Breast epithelium (tissue), 4 donors: ENCODE measurements at regions of chr3 and their contacts with region 1.

Region 1: DNA sequence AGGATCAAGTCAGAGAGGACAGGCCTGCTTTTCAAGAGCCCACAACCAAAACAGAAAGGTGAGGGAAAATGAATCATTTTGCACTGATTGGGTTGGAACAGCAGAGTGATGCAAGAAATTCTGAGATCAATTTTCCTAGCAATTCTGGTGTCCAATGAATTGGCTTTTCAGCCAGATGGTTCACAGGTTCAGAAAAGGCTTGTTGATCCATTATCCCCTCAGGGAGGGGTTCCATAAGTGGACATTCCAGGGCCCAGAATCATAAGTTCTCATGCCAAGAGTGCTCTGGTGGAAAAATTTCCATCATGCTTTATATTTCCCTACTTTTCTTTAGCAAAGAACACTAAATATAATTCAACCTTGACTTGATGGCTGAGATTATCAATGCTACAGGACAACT is 16.2 kb downstream of the RBP2 start:
- DNase-seq: no peak
- H3K4me3 ChIP-seq: no peak overlapping the region
- H3K27ac ChIP-seq: no peak overlapping the region
- H3K4me1 ChIP-seq: no peaks in the 10 kb centered on the region
- H3K27me3 ChIP-seq: no peaks in the 10 kb centered on the region
- CTCF ChIP-seq: no peak
- POLR2A ChIP-seq: no peak

Region 2: DNA sequence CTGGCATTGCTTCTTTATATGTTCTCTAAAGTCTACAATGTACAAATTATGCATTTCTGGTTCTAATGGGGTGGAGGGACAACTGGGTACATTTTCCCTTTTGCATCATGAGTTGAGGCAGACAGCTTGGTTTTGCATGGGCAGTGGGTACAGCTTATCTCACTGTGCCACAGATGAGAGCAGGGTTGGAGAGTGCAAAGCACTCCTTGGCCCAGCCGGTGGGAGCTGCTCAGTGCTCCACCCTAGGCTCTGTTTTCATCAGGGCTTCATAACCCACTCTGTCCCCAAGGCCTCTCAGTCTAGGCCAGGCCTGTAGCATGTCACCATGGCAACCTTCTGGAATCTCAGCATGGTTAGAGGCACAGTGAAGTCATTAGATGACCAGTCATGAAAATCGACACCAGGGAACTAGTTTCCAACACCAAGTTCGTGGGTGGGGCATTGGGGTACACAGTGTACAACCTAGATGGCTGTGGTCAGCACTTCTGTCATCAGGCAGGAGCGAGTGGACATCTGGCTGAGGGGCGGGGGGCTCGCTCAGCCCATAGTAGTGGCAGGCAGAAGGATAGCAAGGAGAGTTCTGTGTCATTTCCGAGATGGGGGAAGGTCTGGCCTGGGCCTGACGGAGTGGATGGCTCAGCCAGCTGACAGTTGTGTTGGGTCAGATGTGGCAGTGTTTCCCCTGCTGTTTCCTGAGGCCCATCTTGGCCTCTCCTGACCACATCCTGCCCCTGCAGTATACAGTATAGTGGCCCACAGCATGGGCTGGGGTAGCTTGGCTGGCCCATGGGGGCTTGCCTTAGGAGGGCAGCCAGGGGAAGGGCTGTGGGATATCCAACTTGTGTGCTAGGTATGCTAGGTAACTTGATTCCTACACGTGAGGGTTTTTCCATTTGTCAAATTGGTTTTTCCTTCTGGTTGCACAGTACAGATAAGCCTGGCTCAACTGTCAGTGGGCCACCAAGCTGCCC is 339.7 kb before region 1 on chr3:
- intact Hi-C with region 1: no loop called
- DNase-seq: no peak
- H3K4me3 ChIP-seq: no peak overlapping the region
- H3K27ac ChIP-seq: no peak overlapping the region
- H3K4me1 ChIP-seq: no peaks in the 10 kb centered on the region
- H3K27me3 ChIP-seq: no peaks in the 10 kb centered on the region
- CTCF ChIP-seq: no peak
- POLR2A ChIP-seq: no peak

Region 3: DNA sequence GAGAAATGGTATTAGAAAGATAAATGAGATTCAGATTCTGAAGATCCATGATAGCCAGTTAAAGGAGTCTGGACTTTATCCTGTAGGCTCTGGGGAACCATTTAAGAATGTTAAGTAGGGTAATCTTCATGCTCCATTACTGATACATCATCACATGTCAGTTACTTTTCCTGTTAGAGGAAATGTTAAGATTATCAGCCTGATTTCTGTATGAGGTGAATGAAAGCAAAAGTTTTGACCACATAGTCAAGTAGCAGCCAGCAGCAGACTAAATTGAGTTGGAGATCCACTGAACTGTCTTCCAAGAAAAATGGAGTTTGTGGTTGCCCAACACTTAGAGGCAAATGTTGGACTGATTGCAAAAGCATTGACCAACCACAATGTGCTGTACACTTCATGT is 66.0 kb before region 1 on chr3:
- intact Hi-C with region 1: no loop called
- DNase-seq: no peak
- H3K4me3 ChIP-seq: no peak overlapping the region
- H3K27ac ChIP-seq: no peak overlapping the region
- H3K4me1 ChIP-seq: no peaks in the 10 kb centered on the region
- H3K27me3 ChIP-seq: no peaks in the 10 kb centered on the region
- CTCF ChIP-seq: no peak
- POLR2A ChIP-seq: no peak

Region 4: DNA sequence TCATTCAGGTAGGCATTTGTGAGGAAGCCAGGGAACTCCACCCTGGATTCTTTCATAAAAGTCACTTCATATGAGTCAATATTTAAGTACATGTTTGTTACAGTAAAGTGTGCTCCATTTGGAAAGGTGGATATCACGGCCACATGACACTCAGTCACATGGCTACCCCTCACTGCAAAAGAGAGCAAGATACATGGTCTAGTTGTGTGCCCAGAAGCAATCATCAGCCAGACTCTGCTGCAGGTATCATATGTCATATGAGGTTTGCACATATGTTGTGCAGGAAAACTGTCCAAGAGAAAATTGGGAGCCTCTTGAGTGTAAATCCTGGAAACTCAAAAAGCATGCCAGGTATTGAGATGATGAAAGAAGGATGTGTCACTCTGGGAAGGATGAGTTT is 272.7 kb after region 1 on chr3:
- intact Hi-C with region 1: no loop called
- DNase-seq: no peak
- H3K4me3 ChIP-seq: no peak overlapping the region
- H3K27ac ChIP-seq: no peak overlapping the region
- H3K4me1 ChIP-seq: no peaks in the 10 kb centered on the region
- H3K27me3 ChIP-seq: no peaks in the 10 kb centered on the region
- CTCF ChIP-seq: no peak
- POLR2A ChIP-seq: no peak

Region 5: DNA sequence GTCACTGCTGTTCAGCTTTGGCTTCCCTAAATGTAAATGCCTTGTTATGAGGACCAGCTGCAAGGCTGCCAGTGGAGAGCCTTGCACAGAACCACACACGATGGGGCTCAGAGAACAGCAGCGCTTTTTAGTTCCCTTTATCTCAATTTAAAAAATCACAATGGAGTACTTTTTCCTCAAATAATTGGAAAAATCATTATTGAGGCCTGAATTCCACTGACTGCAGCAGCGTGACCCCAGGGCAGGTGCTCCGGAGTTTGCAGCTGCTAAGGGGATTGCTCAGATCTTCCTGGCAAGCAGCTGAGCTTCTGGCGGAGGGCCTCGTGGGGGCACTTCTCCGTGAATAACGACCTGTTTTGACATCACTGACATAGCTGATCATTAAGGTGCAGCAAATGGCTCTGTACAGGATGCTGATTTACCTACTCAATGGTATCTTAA is 972.2 kb after region 1 on chr3:
- intact Hi-C with region 1: loop called (anchors 5 kb)
- DNase-seq: no peak
- H3K4me3 ChIP-seq: no peak overlapping the region
- H3K27ac ChIP-seq: no peak overlapping the region
- H3K4me1 ChIP-seq: no peaks in the 10 kb centered on the region
- H3K27me3 ChIP-seq: no peaks in the 10 kb centered on the region
- CTCF ChIP-seq: no peak
- POLR2A ChIP-seq: no peak